ENCODE measurements at regions of chr7 and their contacts with region 1.

Region 1: GRCh38 chr7:45136106-45137060 is 21.2 kb upstream of the RAMP3 start:
- DNase-seq: peak; percentile 86
- H3K4me3 ChIP-seq: no peak overlapping the region; a peak in 1 of 4 replicates
- H3K27ac ChIP-seq: no peak overlapping the region
- H3K4me1 ChIP-seq: no peaks in the 10 kb centered on the region
- H3K27me3 ChIP-seq: peaks cover 9% of the 10 kb centered on the region; the same call in 1 of the 2 replicates
- CTCF ChIP-seq: peak; percentile 99
- EP300 ChIP-seq: no peak
- RAD21 ChIP-seq: peak; percentile 100

Region 2: DNA sequence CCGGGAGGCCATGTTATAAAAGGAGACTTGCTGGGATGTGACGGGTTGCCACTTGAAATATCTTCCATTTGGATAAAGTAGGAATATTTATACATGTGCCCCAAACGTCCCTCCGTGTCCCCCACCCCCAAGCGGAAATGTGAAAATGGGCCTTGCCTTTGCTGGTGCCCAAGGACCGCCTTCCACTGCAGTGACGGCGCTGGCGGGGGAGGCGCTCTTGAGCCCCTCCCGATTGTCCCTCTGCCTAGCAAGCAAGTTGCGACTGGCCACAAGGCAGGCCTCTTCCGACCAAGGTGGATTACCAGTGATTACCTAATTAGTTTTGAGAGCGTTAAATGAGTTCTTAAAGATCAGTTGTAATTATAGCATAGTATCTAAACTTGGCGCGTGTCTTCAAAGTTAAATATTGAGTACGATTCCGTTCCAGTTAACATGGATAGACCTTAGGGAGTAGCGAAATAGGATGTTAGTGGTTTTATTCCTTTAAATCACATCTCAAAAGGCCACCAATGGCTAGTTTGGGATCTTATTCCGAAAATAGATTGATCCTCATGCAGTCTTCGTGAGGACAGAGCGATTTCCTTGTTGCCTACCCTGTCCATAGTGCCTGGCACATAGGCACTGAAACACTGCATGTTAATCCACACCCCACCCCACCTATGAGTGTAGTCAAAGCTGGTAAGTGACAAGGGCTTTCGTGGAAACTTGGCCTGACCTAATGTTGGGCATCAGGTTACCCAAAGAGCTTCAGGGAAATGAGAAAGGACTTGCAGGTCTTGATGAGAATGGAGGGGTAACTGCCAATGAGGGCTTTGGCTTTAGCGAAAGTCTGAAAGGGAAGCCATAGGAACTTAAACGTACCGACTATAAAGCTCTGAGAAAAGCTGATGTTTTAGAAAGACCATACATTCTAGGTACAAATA is 338.8 kb before region 1 on chr7:
- CTCF ChIA-PET with region 1: interaction called, 13 read pairs
- POLR2A ChIA-PET with region 1: no interaction called
- DNase-seq: peak; percentile 86
- H3K4me3 ChIP-seq: peak overlapping the region; percentile 75 to 97
- H3K27ac ChIP-seq: peak overlapping the region; percentile 91 to 97
- H3K4me1 ChIP-seq: peaks cover 5 to 7% of the 10 kb centered on the region in 2 experiments; a peak in 3 of 4 replicates
- H3K27me3 ChIP-seq: no peaks in the 10 kb centered on the region
- CTCF ChIP-seq: peak; percentile 59
- EP300 ChIP-seq: peak; percentile 7 to 9; a peak in 2 of 4 replicates
- RAD21 ChIP-seq: peak; percentile 49

Region 3: GRCh38 chr7:44867073-44867995 is 269.0 kb before region 1 on chr7:
- CTCF ChIA-PET with region 1: interaction called, 15 read pairs
- POLR2A ChIA-PET with region 1: no interaction called
- DNase-seq: no peak
- H3K4me3 ChIP-seq: no peak overlapping the region
- H3K27ac ChIP-seq: peak overlapping the region in 1 of 2 experiments; percentile 47; a peak in 1 of 4 replicates
- H3K4me1 ChIP-seq: 0 out of 4 replicates have a peak, but pooled peaks cover 0 to 12% of the 10 kb centered on the region in 2 experiments
- H3K27me3 ChIP-seq: no peaks in the 10 kb centered on the region
- CTCF ChIP-seq: no peak
- EP300 ChIP-seq: peak in 1 of 2 experiments; percentile 61; a peak in 1 of 4 replicates
- RAD21 ChIP-seq: no peak

Region 4: GRCh38 chr7:44936322-44936721 is 200.1 kb before region 1 on chr7:
- CTCF ChIA-PET with region 1: interaction called, 16 read pairs
- POLR2A ChIA-PET with region 1: no interaction called
- DNase-seq: no peak
- H3K4me3 ChIP-seq: no peak overlapping the region
- H3K27ac ChIP-seq: no peak overlapping the region
- H3K4me1 ChIP-seq: no peaks in the 10 kb centered on the region
- H3K27me3 ChIP-seq: peaks cover 27% of the 10 kb centered on the region; the same call in 1 of the 2 replicates
- CTCF ChIP-seq: no peak
- EP300 ChIP-seq: no peak
- RAD21 ChIP-seq: no peak

Region 5: GRCh38 chr7:44973610-44974401 is 162.6 kb before region 1 on chr7:
- CTCF ChIA-PET with region 1: interaction called, 125 read pairs
- POLR2A ChIA-PET with region 1: interaction called, 7 read pairs
- DNase-seq: peak; percentile 75
- H3K4me3 ChIP-seq: no peak overlapping the region
- H3K27ac ChIP-seq: no peak overlapping the region
- H3K4me1 ChIP-seq: peaks cover 0 to 3% of the 10 kb centered on the region in 2 experiments; a peak in 1 of 4 replicates
- H3K27me3 ChIP-seq: no peaks in the 10 kb centered on the region
- CTCF ChIP-seq: peak; percentile 61
- EP300 ChIP-seq: no peak
- RAD21 ChIP-seq: peak; percentile 59

Region 6: DNA sequence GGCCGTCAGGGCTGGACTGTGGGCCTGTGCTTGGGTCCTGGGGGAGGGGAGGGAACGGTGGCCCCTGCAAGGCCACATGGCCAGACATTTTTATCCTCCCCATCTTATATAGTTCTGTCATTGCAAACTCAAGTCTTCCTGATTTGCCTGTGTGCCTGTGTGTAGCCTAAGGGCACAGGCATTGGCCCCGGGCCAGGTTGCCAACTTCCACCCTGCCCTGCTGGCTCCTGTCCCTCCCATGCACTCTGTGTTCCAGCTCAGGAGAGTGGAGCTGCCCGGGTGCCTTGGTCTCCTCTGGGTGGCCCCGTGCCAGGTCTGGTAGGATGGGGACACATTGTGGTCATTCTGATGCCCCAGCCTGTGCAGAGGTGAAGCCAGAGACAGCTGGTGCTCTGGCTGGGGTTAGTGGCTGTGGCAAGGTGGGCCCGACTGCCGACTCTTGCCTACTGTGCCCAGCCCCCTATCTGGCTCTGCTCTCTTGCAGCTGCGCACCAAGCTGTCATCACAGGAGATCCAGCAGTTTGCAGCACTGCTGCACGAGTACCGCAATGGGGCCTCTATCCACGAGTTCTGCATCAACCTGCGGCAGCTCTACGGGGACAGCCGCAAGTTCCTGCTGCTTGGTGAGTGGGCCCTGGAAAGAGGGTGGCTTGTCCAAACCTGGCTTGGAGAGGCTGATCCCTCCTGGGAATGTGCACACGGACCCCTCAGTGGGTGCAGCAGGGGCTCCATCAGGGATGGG is 62.4 kb before region 1 on chr7:
- CTCF ChIA-PET with region 1: interaction called, 36 read pairs
- POLR2A ChIA-PET with region 1: no interaction called
- DNase-seq: peak; percentile 96
- H3K4me3 ChIP-seq: no peak overlapping the region
- H3K27ac ChIP-seq: peak overlapping the region in 1 of 2 experiments; percentile 91; a peak in 2 of 4 replicates
- H3K4me1 ChIP-seq: peaks cover 0 to 40% of the 10 kb centered on the region in 2 experiments; a peak in 1 of 4 replicates
- H3K27me3 ChIP-seq: no peaks in the 10 kb centered on the region
- CTCF ChIP-seq: no peak
- EP300 ChIP-seq: peak in 1 of 2 experiments; percentile 79; a peak in 2 of 4 replicates
- RAD21 ChIP-seq: peak; percentile 36

Region 7: GRCh38 chr7:45122975-45123860 is 13.2 kb before region 1 on chr7:
- CTCF ChIA-PET with region 1: interaction called, 149 read pairs
- POLR2A ChIA-PET with region 1: no interaction called
- DNase-seq: no peak
- H3K4me3 ChIP-seq: no peak overlapping the region
- H3K27ac ChIP-seq: no peak overlapping the region
- H3K4me1 ChIP-seq: peaks cover 0 to 2% of the 10 kb centered on the region in 2 experiments; a peak in 1 of 4 replicates
- H3K27me3 ChIP-seq: no peaks in the 10 kb centered on the region; the same call in 1 of the 2 replicates
- CTCF ChIP-seq: no peak
- EP300 ChIP-seq: no peak
- RAD21 ChIP-seq: no peak

Region 8: GRCh38 chr7:45324791-45325190 is 188.4 kb after region 1 on chr7:
- CTCF ChIA-PET with region 1: no interaction called
- POLR2A ChIA-PET with region 1: no interaction called
- DNase-seq: no peak
- H3K4me3 ChIP-seq: no peak overlapping the region
- H3K27ac ChIP-seq: no peak overlapping the region
- H3K4me1 ChIP-seq: no peaks in the 10 kb centered on the region
- H3K27me3 ChIP-seq: no peaks in the 10 kb centered on the region
- CTCF ChIP-seq: no peak
- EP300 ChIP-seq: no peak
- RAD21 ChIP-seq: no peak

Measured in SK-N-SH (cell line).